ENCODE measurements at regions of chr7 and their contacts with region 1.

Region 1: GRCh38 chr7:38398725-38399321 is 125.4 kb upstream of the TARP start:
- DNase-seq: no peak
- H3K4me3 Mint-ChIP-seq: no peak overlapping the region
- H3K27ac Mint-ChIP-seq: no peak overlapping the region
- H3K4me1 Mint-ChIP-seq: no peaks in the 10 kb centered on the region
- H3K27me3 Mint-ChIP-seq: peaks cover 13% of the 10 kb centered on the region

Region 2: GRCh38 chr7:38245409-38245977 is 153.3 kb before region 1 on chr7:
- intact Hi-C with region 1: no loop called
- DNase-seq: no peak
- H3K4me3 Mint-ChIP-seq: no peak overlapping the region
- H3K27ac Mint-ChIP-seq: no peak overlapping the region
- H3K4me1 Mint-ChIP-seq: peaks cover 14% of the 10 kb centered on the region
- H3K27me3 Mint-ChIP-seq: peaks cover 7% of the 10 kb centered on the region

Region 3: DNA sequence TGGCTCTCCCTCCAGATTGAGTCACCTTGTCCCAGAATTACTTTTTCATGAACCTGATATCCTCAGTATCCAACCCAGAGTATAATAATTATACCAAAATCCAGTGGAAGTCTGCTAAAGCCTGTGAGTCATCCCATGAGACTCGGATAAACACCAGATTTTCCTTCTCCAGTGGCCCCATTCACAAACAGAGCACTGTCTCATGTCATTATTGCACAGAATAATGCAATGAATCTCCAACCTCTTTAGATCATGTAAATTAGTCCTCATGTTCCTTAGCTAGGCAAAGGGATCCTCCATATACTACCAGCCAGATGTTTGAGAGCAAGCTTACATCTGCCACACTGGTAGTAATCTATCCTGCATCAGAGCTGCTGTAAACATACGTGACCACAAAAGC is 143.3 kb after region 1 on chr7:
- intact Hi-C with region 1: loop called (anchors 10 kb)
- DNase-seq: no peak
- H3K4me3 Mint-ChIP-seq: no peak overlapping the region
- H3K27ac Mint-ChIP-seq: no peak overlapping the region
- H3K4me1 Mint-ChIP-seq: no peaks in the 10 kb centered on the region
- H3K27me3 Mint-ChIP-seq: peaks cover 4% of the 10 kb centered on the region

Region 4: GRCh38 chr7:38660427-38661099 is 261.7 kb after region 1 on chr7:
- intact Hi-C with region 1: loop called (anchors 1 kb)
- DNase-seq: no peak
- H3K4me3 Mint-ChIP-seq: no peak overlapping the region
- H3K27ac Mint-ChIP-seq: no peak overlapping the region
- H3K4me1 Mint-ChIP-seq: no peaks in the 10 kb centered on the region
- H3K27me3 Mint-ChIP-seq: peaks cover 3% of the 10 kb centered on the region

Region 5: DNA sequence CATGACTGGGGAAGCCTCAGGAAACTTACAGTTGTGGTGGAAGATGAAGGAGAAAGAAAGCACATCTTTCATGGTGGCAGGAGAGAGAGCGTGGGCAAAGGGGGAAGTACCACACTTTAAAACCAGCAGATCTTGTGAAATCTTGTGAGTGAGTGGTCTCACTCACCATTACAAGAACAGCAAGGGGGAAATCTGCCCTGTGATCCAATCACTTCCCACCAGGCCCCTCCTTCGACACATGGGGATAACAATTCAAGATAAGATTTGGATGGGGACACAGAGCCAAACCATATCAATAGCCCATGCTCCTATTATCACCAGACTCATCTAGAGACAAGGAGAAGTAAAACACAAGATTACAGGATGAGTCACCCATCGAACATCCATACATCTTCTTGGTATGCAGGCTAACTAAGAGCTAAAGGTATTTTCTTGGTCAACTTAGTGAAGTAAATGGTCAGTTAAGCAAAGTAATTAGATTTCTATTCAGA is 1112.1 kb after region 1 on chr7:
- intact Hi-C with region 1: loop called (anchors 10 kb)
- DNase-seq: no peak
- H3K4me3 Mint-ChIP-seq: no peak overlapping the region
- H3K27ac Mint-ChIP-seq: no peak overlapping the region
- H3K4me1 Mint-ChIP-seq: peaks cover 11% of the 10 kb centered on the region
- H3K27me3 Mint-ChIP-seq: peaks cover 8% of the 10 kb centered on the region